Right lobe of liver (tissue), 6 donors: ENCODE measurements at regions of chr9 and their contacts with region 1.

Region 1: GRCh38 chr9:134178768-134179551 is 14.6 kb upstream of the RNU6ATAC start:
- DNase-seq: peak; percentile 85 to 92 (median 90)
- ATAC-seq: peak; percentile 58 to 68 (median 60)
- H3K4me3 ChIP-seq: peak overlapping the region in 1 of 3 donors; percentile 33
- H3K27ac ChIP-seq: peak overlapping the region; percentile 35 to 89 (median 83)
- H3K4me1 ChIP-seq: peaks cover 0 to 65% (median 37%) of the 10 kb centered on the region in 4 donors
- H3K27me3 ChIP-seq: no peaks in the 10 kb centered on the region
- CTCF ChIP-seq: peak in 2 of 4 donors; percentile 12 to 14
- POLR2A ChIP-seq: peak; percentile 67

Region 2: DNA sequence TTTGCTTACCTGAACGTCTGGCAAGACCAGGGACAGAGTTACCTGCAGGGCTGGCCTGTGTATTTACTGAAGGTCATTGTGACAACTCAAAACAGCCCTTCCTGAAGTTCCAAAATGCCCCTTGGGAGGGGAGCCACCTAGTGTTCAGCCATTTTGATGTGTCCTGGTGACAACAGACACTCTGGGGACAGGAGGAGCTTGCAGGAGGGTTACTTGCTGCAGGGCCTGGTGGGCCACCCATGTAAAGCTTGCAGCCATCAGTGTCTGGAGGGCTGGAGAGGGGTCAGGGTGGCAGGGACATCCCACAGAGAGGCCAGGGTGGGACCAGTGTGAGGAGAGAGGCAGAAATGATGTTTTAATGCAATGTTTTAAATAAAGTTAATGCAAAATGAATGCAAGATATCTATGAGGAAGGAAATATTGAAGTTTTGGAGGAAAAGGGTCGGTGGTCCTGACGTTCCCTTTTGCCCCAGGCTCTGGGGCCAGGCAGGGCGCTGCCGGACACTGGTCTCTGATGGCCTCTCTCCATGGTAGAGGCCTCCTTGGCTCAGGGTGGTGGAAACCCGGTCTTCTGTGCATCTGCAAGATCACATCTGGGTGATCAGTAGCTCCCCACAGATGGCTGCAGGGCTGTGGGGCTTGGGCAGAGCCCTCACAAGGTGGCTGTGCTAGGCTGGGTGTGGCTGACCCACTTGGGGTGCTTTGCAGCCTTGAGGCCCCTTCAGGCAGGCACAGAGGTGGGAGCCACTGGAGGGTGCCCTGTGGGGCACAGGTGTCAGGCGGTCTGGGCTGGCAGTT is 39.1 kb after region 1 on chr9:
- intact Hi-C with region 1: loop called in 1 of 2 experiments (anchors 5 kb)
- DNase-seq: peak; percentile 42 to 81 (median 65)
- ATAC-seq: peak; percentile 8 to 31 (median 28)
- H3K4me3 ChIP-seq: peak overlapping the region in 2 of 3 donors; percentile 5 to 48
- H3K27ac ChIP-seq: peak overlapping the region; percentile 93 to 100 (median 100)
- H3K4me1 ChIP-seq: peaks cover 2 to 81% (median 33%) of the 10 kb centered on the region in 4 donors
- H3K27me3 ChIP-seq: no peaks in the 10 kb centered on the region
- CTCF ChIP-seq: peak; percentile 46 to 64 (median 52)
- POLR2A ChIP-seq: no peak

Region 3: GRCh38 chr9:134253606-134254198 is 74.7 kb after region 1 on chr9:
- intact Hi-C with region 1: loop called in 1 of 2 experiments (anchors 10 kb)
- DNase-seq: peak in 1 of 3 donors; percentile 3
- ATAC-seq: no peak
- H3K4me3 ChIP-seq: no peak overlapping the region
- H3K27ac ChIP-seq: no peak overlapping the region
- H3K4me1 ChIP-seq: peaks cover 0 to 14% (median 5%) of the 10 kb centered on the region in 4 donors
- H3K27me3 ChIP-seq: no peaks in the 10 kb centered on the region
- CTCF ChIP-seq: no peak
- POLR2A ChIP-seq: no peak

Region 4: GRCh38 chr9:134325817-134326723 is 147.1 kb after region 1 on chr9 and contains the start of gene RXRA:
- intact Hi-C with region 1: loop called (anchors 10 kb)
- DNase-seq: peak; percentile 94
- ATAC-seq: peak; percentile 20 to 45 (median 42)
- H3K4me3 ChIP-seq: peak within 1 kb of the TSS; percentile 86 to 94 (median 90)
- H3K27ac ChIP-seq: peak within 1 kb of the TSS; percentile 99
- H3K4me1 ChIP-seq: peaks cover 0 to 63% (median 25%) of the 10 kb centered on the region in 4 donors
- H3K27me3 ChIP-seq: no peaks in the 10 kb centered on the region
- CTCF ChIP-seq: peak in 2 of 4 donors; percentile 11 to 32
- POLR2A ChIP-seq: peak; percentile 96
- total RNA-seq, gene RXRA: 105 to 165 (median 131) TPM

Region 5: GRCh38 chr9:134344068-134344799 is 165.3 kb after region 1 on chr9:
- intact Hi-C with region 1: loop called in 1 of 2 experiments (anchors 10 kb)
- DNase-seq: peak in 2 of 3 donors; percentile 75 to 82
- ATAC-seq: peak in 3 of 4 donors; percentile 0 to 14 (median 1)
- H3K4me3 ChIP-seq: no peak overlapping the region
- H3K27ac ChIP-seq: peak overlapping the region; percentile 43 to 72 (median 65)
- H3K4me1 ChIP-seq: peaks cover 0 to 98% (median 54%) of the 10 kb centered on the region in 4 donors
- H3K27me3 ChIP-seq: no peaks in the 10 kb centered on the region
- CTCF ChIP-seq: no peak
- POLR2A ChIP-seq: no peak